Right ventricle myocardium superior (tissue), 1 donor: ENCODE measurements at regions of chr3 and their contacts with region 1.

Region 1: GRCh38 chr3:24582431-24583403 is 88.1 kb upstream of the THRB start:
- DNase-seq: no peak
- ATAC-seq: peak; percentile 81

Region 2: GRCh38 chr3:24264748-24265158 is 318.0 kb before region 1 on chr3:
- intact Hi-C with region 1: loop called (anchors 10 kb)
- DNase-seq: no peak
- ATAC-seq: peak; percentile 67

Region 3: GRCh38 chr3:24914036-24914435 is 331.3 kb after region 1 on chr3:
- intact Hi-C with region 1: no loop called
- DNase-seq: no peak
- ATAC-seq: no peak